K562 (cell line): ENCODE measurements at regions of chr11 and their contacts with region 1.

Region 1: GRCh38 chr11:12411806-12412727 is 34.7 kb downstream of the PARVA start:
- DNase-seq: peak; percentile 73 to 77 (median 76)
- ATAC-seq: peak; percentile 99
- H3K4me3 ChIP-seq: no peak overlapping the region
- H3K27ac ChIP-seq: no peak overlapping the region
- H3K4me1 ChIP-seq: 0 out of 5 replicates have a peak, but pooled peaks cover 0 to 3% of the 10 kb centered on the region in 2 experiments
- H3K27me3 ChIP-seq: peaks cover 2 to 16% of the 10 kb centered on the region in 2 experiments
- CTCF ChIP-seq: peak; percentile 77 to 90 (median 84)
- EP300 ChIP-seq: no peak
- POLR2A ChIP-seq: no peak
- RAD21 ChIP-seq: peak; percentile 89 to 95

Region 2: GRCh38 chr11:12356944-12357650 is 55.0 kb before region 1 on chr11:
- CTCF ChIA-PET with region 1: no interaction called
- POLR2A ChIA-PET with region 1: no interaction called
- in situ Hi-C with region 1: no loop called
- intact Hi-C with region 1: loop called (anchors 10 kb)
- DNase-seq: no peak
- ATAC-seq: no peak
- H3K4me3 ChIP-seq: no peak overlapping the region
- H3K27ac ChIP-seq: no peak overlapping the region
- H3K4me1 ChIP-seq: no peaks in the 10 kb centered on the region
- H3K27me3 ChIP-seq: peaks cover 5 to 11% of the 10 kb centered on the region in 2 experiments; a peak in 3 of 5 replicates
- CTCF ChIP-seq: no peak
- EP300 ChIP-seq: no peak
- POLR2A ChIP-seq: no peak
- RAD21 ChIP-seq: no peak

Region 3: DNA sequence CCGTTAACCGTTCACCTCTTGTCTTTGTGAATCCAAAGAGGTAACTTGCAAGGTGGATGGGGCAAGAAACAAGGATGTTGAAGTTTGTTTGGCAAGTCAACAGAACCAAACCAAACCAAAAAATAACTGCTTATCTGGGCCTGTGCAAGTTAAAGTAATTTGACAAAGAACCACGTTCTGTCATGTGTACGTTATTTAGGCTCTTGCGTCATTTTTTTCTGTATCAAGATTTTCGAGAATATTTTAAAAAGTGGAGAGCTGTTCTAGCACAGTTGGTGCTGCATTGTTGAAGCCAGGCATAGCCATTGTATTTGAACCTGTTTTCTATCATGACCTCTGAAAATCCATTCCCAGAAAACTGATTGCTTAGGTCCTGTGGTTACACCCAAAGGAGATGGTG is 20.4 kb after region 1 on chr11:
- CTCF ChIA-PET with region 1: no interaction called
- POLR2A ChIA-PET with region 1: no interaction called
- in situ Hi-C with region 1: no loop called
- intact Hi-C with region 1: loop called (anchors 1 kb)
- DNase-seq: no peak
- ATAC-seq: no peak
- H3K4me3 ChIP-seq: no peak overlapping the region
- H3K27ac ChIP-seq: no peak overlapping the region
- H3K4me1 ChIP-seq: no peaks in the 10 kb centered on the region; a peak in 1 of 5 replicates
- H3K27me3 ChIP-seq: peaks cover 12 to 21% of the 10 kb centered on the region in 2 experiments; a peak in 3 of 5 replicates
- CTCF ChIP-seq: no peak
- EP300 ChIP-seq: no peak
- POLR2A ChIP-seq: no peak
- RAD21 ChIP-seq: no peak

Region 4: GRCh38 chr11:12599408-12600143 is 187.5 kb after region 1 on chr11:
- CTCF ChIA-PET with region 1: no interaction called
- POLR2A ChIA-PET with region 1: no interaction called
- in situ Hi-C with region 1: no loop called
- intact Hi-C with region 1: loop called (anchors 5 kb)
- DNase-seq: peak; percentile 62 to 80 (median 66)
- ATAC-seq: peak; percentile 93
- H3K4me3 ChIP-seq: no peak overlapping the region
- H3K27ac ChIP-seq: no peak overlapping the region; the same call in 2 of the 3 replicates
- H3K4me1 ChIP-seq: peaks cover 4 to 27% of the 10 kb centered on the region in 2 experiments
- H3K27me3 ChIP-seq: no peaks in the 10 kb centered on the region
- CTCF ChIP-seq: peak; percentile 81 to 93 (median 85)
- EP300 ChIP-seq: no peak
- POLR2A ChIP-seq: no peak
- RAD21 ChIP-seq: peak; percentile 67 to 87

Region 5: DNA sequence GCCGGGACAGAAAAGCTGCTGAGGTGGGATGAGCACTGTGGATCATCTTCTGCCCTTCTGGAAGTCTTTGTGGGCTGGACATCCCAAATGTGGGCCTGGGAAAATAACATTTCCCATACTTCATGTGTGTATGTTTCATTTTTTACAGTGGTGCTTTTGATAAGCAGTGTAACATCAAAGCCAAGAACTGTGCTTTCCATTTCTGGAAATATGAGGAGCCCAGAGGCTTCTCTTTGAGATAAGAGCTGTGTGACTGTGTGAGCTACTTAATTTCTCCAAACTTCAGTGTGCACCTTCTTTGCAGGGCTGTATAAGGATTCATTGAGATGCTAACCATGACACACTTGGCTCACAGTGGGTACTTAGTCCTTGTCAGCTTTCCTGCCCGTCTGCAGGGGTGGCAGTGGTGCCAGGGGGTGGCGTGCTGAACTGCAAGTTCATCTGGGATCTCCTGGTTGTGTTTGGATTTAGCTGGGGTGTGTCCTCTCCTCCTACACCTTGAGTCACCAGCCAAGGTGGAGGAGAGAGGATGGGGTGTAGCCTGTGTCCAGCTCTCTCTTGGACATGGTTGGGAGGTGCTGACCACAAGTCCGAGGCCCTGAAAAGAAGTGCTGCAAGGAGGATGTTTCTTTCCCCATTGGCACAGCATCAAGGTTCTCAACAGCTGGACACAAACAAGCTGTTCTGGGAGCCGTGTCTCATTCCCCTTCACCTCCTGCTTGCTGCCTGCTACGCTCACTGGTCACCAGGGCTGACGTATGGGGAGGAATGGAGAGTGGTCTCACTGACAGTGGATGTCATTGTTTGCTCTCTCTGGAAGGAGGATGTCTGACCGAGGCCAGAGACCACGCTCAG is 401.5 kb after region 1 on chr11:
- CTCF ChIA-PET with region 1: no interaction called
- POLR2A ChIA-PET with region 1: no interaction called
- in situ Hi-C with region 1: no loop called
- intact Hi-C with region 1: loop called (anchors 5 kb)
- DNase-seq: peak; percentile 16 to 54 (median 34)
- ATAC-seq: peak; percentile 15
- H3K4me3 ChIP-seq: no peak overlapping the region
- H3K27ac ChIP-seq: 0 out of 3 replicates have a peak overlapping the region, but pooled peaks have one; percentile 0
- H3K4me1 ChIP-seq: peaks cover 31 to 58% of the 10 kb centered on the region in 2 experiments
- H3K27me3 ChIP-seq: no peaks in the 10 kb centered on the region
- CTCF ChIP-seq: no peak
- EP300 ChIP-seq: no peak
- POLR2A ChIP-seq: no peak
- RAD21 ChIP-seq: 0 out of 4 replicates have a peak, but pooled peaks of 1 of the 2 experiments have one; percentile 1

Region 6: GRCh38 chr11:12893787-12894672 is 482.0 kb after region 1 on chr11:
- CTCF ChIA-PET with region 1: interaction called, 8 read pairs
- POLR2A ChIA-PET with region 1: no interaction called
- in situ Hi-C with region 1: loop called (anchors 5 kb)
- intact Hi-C with region 1: no loop called
- DNase-seq: peak; percentile 63 to 65 (median 65)
- ATAC-seq: peak; percentile 90
- H3K4me3 ChIP-seq: no peak overlapping the region
- H3K27ac ChIP-seq: no peak overlapping the region
- H3K4me1 ChIP-seq: peaks cover 0 to 3% of the 10 kb centered on the region in 2 experiments; a peak in 2 of 5 replicates
- H3K27me3 ChIP-seq: no peaks in the 10 kb centered on the region
- CTCF ChIP-seq: peak; percentile 69 to 84 (median 81)
- EP300 ChIP-seq: no peak
- POLR2A ChIP-seq: no peak
- RAD21 ChIP-seq: peak; percentile 78 to 81